A673 (cell line): ENCODE measurements at regions of chr2 and their contacts with region 1.

Region 1: GRCh38 chr2:186641807-186642321 is 52.0 kb upstream of the FAM171B start:
- DNase-seq: peak; percentile 75
- H3K4me3 ChIP-seq: no peak overlapping the region
- H3K27ac ChIP-seq: no peak overlapping the region
- H3K4me1 ChIP-seq: no peaks in the 10 kb centered on the region
- H3K27me3 ChIP-seq: no peaks in the 10 kb centered on the region
- CTCF ChIP-seq: peak; percentile 81

Region 2: DNA sequence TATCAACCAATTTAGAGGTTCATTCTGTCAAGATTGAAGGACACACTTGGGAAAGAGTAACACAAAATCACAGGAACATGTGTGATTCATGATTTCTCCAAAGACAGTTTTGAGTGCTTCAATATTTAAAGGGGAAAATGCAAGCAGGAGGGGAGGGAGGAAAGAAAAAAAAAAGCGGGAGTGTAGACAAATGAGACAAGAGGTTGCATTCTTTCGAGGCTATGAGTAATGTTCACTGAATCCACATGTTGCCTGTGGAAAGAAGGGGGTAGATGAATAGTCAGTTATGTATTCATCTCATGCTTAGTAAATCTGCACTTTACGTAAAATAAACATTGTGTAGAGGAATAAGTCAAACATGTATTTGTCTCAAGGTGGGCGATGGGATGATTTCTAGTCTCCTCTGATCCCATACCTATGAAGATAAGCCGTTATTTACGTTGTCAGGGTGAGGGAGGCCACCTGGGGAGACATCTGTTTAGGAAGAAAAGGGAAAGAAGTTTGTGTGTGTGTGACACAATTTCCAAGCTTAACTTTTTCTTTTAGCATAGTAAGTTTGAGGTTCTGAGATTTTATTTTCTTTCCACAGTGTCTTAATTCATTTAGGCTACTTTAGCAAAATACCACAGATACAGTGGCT is 366.8 kb before region 1 on chr2:
- CTCF ChIA-PET with region 1: no interaction called
- POLR2A ChIA-PET with region 1: no interaction called
- intact Hi-C with region 1: loop called (anchors 10 kb)
- DNase-seq: no peak
- H3K4me3 ChIP-seq: no peak overlapping the region
- H3K27ac ChIP-seq: no peak overlapping the region
- H3K4me1 ChIP-seq: no peaks in the 10 kb centered on the region
- H3K27me3 ChIP-seq: no peaks in the 10 kb centered on the region
- CTCF ChIP-seq: no peak